ENCODE measurements at regions of chr1 and their contacts with region 1.

Region 1: GRCh38 chr1:23367791-23368561 is 1.7 kb downstream of the ZNF436 start:
- DNase-seq: peak; percentile 94 to 99 (median 97)
- ATAC-seq: peak; percentile 90
- H3K4me3 ChIP-seq: peak overlapping the region; percentile 95 to 97
- H3K4me3 Mint-ChIP-seq: peak overlapping the region; percentile 100
- H3K27ac ChIP-seq: peak overlapping the region; percentile 68 to 92
- H3K27ac Mint-ChIP-seq: peak overlapping the region; percentile 94
- H3K4me1 ChIP-seq: peaks cover 21% of the 10 kb centered on the region
- H3K4me1 Mint-ChIP-seq: peaks cover 38% of the 10 kb centered on the region
- H3K27me3 ChIP-seq: no peaks in the 10 kb centered on the region
- H3K27me3 Mint-ChIP-seq: no peaks in the 10 kb centered on the region
- CTCF ChIP-seq: no peak

Region 2: DNA sequence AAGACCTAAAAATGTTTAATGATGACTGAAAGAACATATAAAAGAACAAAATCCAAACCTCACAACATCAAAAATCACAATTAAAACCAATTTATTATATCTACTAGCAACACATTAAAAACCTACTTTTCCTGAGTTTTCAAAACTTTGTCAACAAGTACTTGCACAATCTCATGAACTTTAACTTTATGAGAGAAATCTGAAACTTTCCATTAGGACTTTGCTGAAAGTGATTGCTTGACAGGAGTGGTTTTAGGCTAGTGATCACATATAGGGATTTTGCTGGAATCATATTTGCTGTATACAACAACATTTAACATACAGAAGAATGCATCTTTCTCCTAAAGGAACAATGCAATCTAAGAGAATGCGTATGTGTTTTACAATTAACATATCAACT is 37.1 kb before region 1 on chr1:
- CTCF ChIA-PET with region 1: no interaction called
- POLR2A ChIA-PET with region 1: no interaction called
- intact Hi-C with region 1: loop called in 1 of 2 experiments (anchors 5 kb)
- DNase-seq: no peak
- ATAC-seq: no peak
- H3K4me3 ChIP-seq: no peak overlapping the region
- H3K4me3 Mint-ChIP-seq: no peak overlapping the region
- H3K27ac ChIP-seq: no peak overlapping the region
- H3K27ac Mint-ChIP-seq: peak overlapping the region; percentile 21
- H3K4me1 ChIP-seq: no peaks in the 10 kb centered on the region
- H3K4me1 Mint-ChIP-seq: peaks cover 34% of the 10 kb centered on the region
- H3K27me3 ChIP-seq: no peaks in the 10 kb centered on the region
- H3K27me3 Mint-ChIP-seq: no peaks in the 10 kb centered on the region
- CTCF ChIP-seq: no peak

Region 3: DNA sequence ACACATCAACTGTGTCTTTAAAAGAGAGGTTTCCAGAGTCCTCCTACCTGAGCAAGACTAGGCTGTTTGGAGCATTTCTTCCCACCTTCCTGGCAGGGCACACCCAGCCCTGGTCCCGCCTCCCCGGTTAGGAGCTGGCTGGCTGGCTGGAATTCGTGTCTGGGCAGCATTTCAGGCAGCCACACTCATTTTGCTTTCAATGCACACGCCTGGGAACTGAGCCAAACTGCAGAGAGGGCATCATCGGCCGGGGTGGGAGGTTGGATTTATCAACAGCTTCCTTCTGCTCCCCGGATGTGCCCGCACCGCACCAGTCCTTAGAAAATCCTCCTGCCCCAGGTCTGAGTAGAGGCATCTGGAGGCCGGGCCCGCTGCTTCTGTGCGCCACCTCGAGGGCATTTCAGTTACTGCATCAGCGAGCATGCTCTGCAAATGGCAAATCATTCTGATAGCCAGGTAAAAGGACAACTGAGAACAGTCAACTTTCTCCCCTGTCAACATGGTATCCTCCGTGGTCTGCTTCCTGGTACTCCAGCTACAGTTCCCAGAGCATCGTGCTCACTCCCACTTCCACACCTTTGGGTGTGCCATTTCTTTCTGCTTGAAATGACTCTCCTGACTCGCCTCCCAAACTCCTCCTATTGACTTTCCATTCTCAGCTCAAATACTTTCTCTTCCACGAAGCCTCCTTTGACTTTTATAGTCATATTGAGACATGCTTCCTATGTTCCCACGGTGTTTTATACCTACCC is 35.9 kb after region 1 on chr1:
- CTCF ChIA-PET with region 1: interaction called, 5 read pairs
- POLR2A ChIA-PET with region 1: interaction called, 4 read pairs
- intact Hi-C with region 1: loop called in 1 of 2 experiments (anchors 2 kb)
- DNase-seq: peak; percentile 69 to 88 (median 78)
- ATAC-seq: peak; percentile 100
- H3K4me3 ChIP-seq: no peak overlapping the region
- H3K4me3 Mint-ChIP-seq: no peak overlapping the region
- H3K27ac ChIP-seq: no peak overlapping the region
- H3K27ac Mint-ChIP-seq: no peak overlapping the region
- H3K4me1 ChIP-seq: peaks cover 4% of the 10 kb centered on the region
- H3K4me1 Mint-ChIP-seq: peaks cover 9% of the 10 kb centered on the region
- H3K27me3 ChIP-seq: no peaks in the 10 kb centered on the region
- H3K27me3 Mint-ChIP-seq: no peaks in the 10 kb centered on the region
- CTCF ChIP-seq: peak; percentile 87

Region 4: GRCh38 chr1:23484253-23485001 is 116.5 kb after region 1 on chr1:
- CTCF ChIA-PET with region 1: no interaction called
- POLR2A ChIA-PET with region 1: no interaction called
- intact Hi-C with region 1: loop called (anchors 1 kb)
- DNase-seq: peak; percentile 84 to 96 (median 91)
- ATAC-seq: peak; percentile 91
- H3K4me3 ChIP-seq: peak overlapping the region; percentile 45 to 57
- H3K4me3 Mint-ChIP-seq: peak overlapping the region; percentile 87
- H3K27ac ChIP-seq: no peak overlapping the region
- H3K27ac Mint-ChIP-seq: peak overlapping the region; percentile 57
- H3K4me1 ChIP-seq: peaks cover 12% of the 10 kb centered on the region
- H3K4me1 Mint-ChIP-seq: peaks cover 17% of the 10 kb centered on the region
- H3K27me3 ChIP-seq: peaks cover 0 to 11% of the 10 kb centered on the region in 2 experiments
- H3K27me3 Mint-ChIP-seq: peaks cover 9% of the 10 kb centered on the region
- CTCF ChIP-seq: no peak

Region 5: GRCh38 chr1:23691499-23692307 is 323.7 kb after region 1 on chr1 and contains the start of gene RPL11:
- CTCF ChIA-PET with region 1: interaction called, 3 read pairs
- POLR2A ChIA-PET with region 1: no interaction called
- intact Hi-C with region 1: loop called in 1 of 2 experiments (anchors 1 kb)
- DNase-seq: peak; percentile 73 to 95 (median 88)
- ATAC-seq: peak; percentile 99
- H3K4me3 ChIP-seq: peak within 1 kb of the TSS; percentile 68 to 84
- H3K4me3 Mint-ChIP-seq: peak within 1 kb of the TSS; percentile 96
- H3K27ac ChIP-seq: peak within 1 kb of the TSS; percentile 74 to 87
- H3K27ac Mint-ChIP-seq: peak within 1 kb of the TSS; percentile 97
- H3K4me1 ChIP-seq: peaks cover 41% of the 10 kb centered on the region
- H3K4me1 Mint-ChIP-seq: peaks cover 46% of the 10 kb centered on the region
- H3K27me3 ChIP-seq: no peaks in the 10 kb centered on the region
- H3K27me3 Mint-ChIP-seq: no peaks in the 10 kb centered on the region
- CTCF ChIP-seq: peak; percentile 77
- total RNA-seq, gene RPL11: 2,153 to 2,178 TPM

Region 6: GRCh38 chr1:23959041-23959460 is 591.1 kb after region 1 on chr1:
- CTCF ChIA-PET with region 1: no interaction called
- POLR2A ChIA-PET with region 1: no interaction called
- intact Hi-C with region 1: loop called in 1 of 2 experiments (anchors 2 kb)
- DNase-seq: peak; percentile 76 to 98 (median 90)
- ATAC-seq: peak; percentile 79
- H3K4me3 ChIP-seq: peak overlapping the region; percentile 83 to 97
- H3K4me3 Mint-ChIP-seq: peak overlapping the region; percentile 100
- H3K27ac ChIP-seq: peak overlapping the region; percentile 95
- H3K27ac Mint-ChIP-seq: peak overlapping the region; percentile 100
- H3K4me1 ChIP-seq: peaks cover 32% of the 10 kb centered on the region
- H3K4me1 Mint-ChIP-seq: peaks cover 59% of the 10 kb centered on the region
- H3K27me3 ChIP-seq: no peaks in the 10 kb centered on the region
- H3K27me3 Mint-ChIP-seq: no peaks in the 10 kb centered on the region
- CTCF ChIP-seq: peak; percentile 34

Region 7: GRCh38 chr1:24642481-24643361 is 1274.7 kb after region 1 on chr1 and contains the start of gene SRRM1:
- CTCF ChIA-PET with region 1: no interaction called
- POLR2A ChIA-PET with region 1: no interaction called
- intact Hi-C with region 1: loop called in 1 of 2 experiments (anchors 10 kb)
- DNase-seq: peak; percentile 96 to 100 (median 98)
- ATAC-seq: peak; percentile 86
- H3K4me3 ChIP-seq: peak within 1 kb of the TSS; percentile 89 to 98
- H3K4me3 Mint-ChIP-seq: peak within 1 kb of the TSS; percentile 88
- H3K27ac ChIP-seq: peak within 1 kb of the TSS; percentile 98 to 100
- H3K27ac Mint-ChIP-seq: peak within 1 kb of the TSS; percentile 99
- H3K4me1 ChIP-seq: peaks cover 32% of the 10 kb centered on the region
- H3K4me1 Mint-ChIP-seq: peaks cover 41% of the 10 kb centered on the region
- H3K27me3 ChIP-seq: no peaks in the 10 kb centered on the region
- H3K27me3 Mint-ChIP-seq: no peaks in the 10 kb centered on the region
- CTCF ChIP-seq: no peak
- total RNA-seq, gene SRRM1: 460 to 474 TPM